Activated naive CD4-positive, alpha-beta T cell treated with anti-CD3 and anti-CD28 coated beads for 36 hours (primary cell): ENCODE measurements at regions of chr19 and their contacts with region 1.

Region 1: DNA sequence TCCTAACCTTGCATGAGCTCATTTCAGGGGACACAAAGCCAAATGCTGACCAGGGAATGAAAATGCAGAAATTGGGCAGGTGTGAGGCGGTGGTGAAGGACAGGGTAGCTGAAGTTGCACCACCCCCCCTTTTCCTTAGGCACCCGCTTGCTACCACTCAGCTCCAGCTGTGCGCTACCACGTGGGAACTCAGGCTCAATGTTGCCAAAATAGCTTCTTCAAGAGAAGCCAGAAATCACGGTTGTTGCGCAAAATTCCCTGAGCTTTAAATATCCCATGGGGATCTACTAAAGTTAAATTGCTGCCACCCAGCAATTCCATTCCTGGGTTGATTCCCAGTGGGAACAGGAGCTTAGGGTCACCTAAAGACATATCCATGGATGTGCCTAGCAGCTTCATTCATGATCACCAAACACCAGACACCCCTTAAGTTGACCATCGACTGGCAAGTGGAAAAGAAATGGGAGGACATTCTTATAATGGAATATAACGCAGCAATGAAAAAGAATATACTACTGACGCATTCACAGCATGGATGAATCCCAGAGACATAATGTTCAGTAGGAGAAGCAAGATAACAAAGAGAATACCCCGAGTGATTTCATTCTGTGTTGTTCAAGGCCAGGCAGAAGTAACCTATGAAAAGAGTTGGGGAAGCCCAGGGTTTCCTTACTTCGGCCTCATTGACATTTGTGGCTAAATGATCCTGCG is 12.8 kb upstream of the ADGRL1 start:
- DNase-seq: no peak
- H3K4me3 Mint-ChIP-seq: no peak overlapping the region
- H3K27ac Mint-ChIP-seq: no peak overlapping the region
- H3K4me1 Mint-ChIP-seq: peaks cover 10% of the 10 kb centered on the region
- H3K27me3 Mint-ChIP-seq: no peaks in the 10 kb centered on the region

Region 2: GRCh38 chr19:14271840-14272239 is 53.1 kb after region 1 on chr19:
- CTCF ChIA-PET with region 1: no interaction called
- intact Hi-C with region 1: loop called (anchors 10 kb)
- DNase-seq: no peak
- H3K4me3 Mint-ChIP-seq: no peak overlapping the region
- H3K27ac Mint-ChIP-seq: no peak overlapping the region
- H3K4me1 Mint-ChIP-seq: peaks cover 16% of the 10 kb centered on the region
- H3K27me3 Mint-ChIP-seq: no peaks in the 10 kb centered on the region

Region 3: GRCh38 chr19:14347999-14348889 is 129.5 kb after region 1 on chr19:
- CTCF ChIA-PET with region 1: interaction called, 8 read pairs
- intact Hi-C with region 1: loop called (anchors 1 kb)
- DNase-seq: peak; percentile 74
- H3K4me3 Mint-ChIP-seq: peak overlapping the region; percentile 43
- H3K27ac Mint-ChIP-seq: peak overlapping the region; percentile 79
- H3K4me1 Mint-ChIP-seq: peaks cover 20% of the 10 kb centered on the region
- H3K27me3 Mint-ChIP-seq: no peaks in the 10 kb centered on the region